ENCODE measurements at regions of chr3 and their contacts with region 1.

Region 1: DNA sequence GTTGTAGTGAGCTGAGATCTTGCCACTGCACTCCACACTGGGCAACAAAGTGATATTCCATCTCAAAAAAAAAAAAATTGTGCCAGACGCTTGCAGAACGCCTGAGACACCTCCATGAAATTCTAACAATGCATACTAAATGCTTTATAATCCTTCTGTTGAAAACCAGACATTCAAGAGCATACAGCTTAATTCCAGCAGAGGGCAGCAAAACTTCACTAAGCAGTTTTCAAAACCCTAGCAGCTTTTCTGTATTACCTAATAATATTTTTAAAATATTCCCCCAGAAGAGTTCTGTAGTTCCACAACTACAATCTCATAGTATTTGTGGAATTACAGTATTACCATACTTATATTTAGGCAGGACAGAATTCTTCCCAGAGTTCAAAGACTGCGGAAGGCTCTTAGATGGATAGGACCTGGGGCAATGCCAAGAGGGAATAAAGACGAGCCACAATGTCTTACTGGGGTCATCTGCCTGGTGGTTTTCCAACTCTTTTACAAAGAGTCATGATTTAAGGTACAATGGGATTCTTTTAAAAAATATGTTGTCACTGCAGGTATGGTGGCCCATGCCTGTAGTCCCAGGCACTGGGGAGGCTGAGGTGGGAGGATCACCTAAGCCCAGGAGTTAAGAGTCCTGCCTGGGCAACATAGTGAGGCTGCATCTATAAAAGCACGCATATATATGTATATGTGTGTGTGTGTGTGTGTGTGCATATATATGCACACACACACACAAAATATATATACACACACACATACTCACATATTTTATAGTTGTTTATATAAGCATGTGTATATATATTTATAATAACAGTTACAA is 19.6 kb upstream of the TASOR start:
- DNase-seq: peak in 1 of 2 donors; percentile 68
- H3K4me3 ChIP-seq: no peak overlapping the region
- H3K27ac ChIP-seq: peak overlapping the region in 1 of 2 donors; percentile 2
- H3K4me1 ChIP-seq: no peaks in the 10 kb centered on the region
- H3K27me3 ChIP-seq: no peaks in the 10 kb centered on the region
- CTCF ChIP-seq: peak; percentile 86 to 96 (median 89)
- POLR2A ChIP-seq: no peak

Region 2: GRCh38 chr3:56494686-56495322 is 207.9 kb before region 1 on chr3:
- intact Hi-C with region 1: no loop called
- DNase-seq: peak; percentile 55 to 63
- H3K4me3 ChIP-seq: no peak overlapping the region
- H3K27ac ChIP-seq: no peak overlapping the region
- H3K4me1 ChIP-seq: no peaks in the 10 kb centered on the region
- H3K27me3 ChIP-seq: no peaks in the 10 kb centered on the region
- CTCF ChIP-seq: peak; percentile 73 to 83 (median 76)
- POLR2A ChIP-seq: no peak

Region 3: GRCh38 chr3:56988458-56989168 is 285.9 kb after region 1 on chr3:
- intact Hi-C with region 1: loop called (anchors 5 kb)
- DNase-seq: peak; percentile 82 to 91
- H3K4me3 ChIP-seq: no peak overlapping the region
- H3K27ac ChIP-seq: peak overlapping the region; percentile 43 to 78
- H3K4me1 ChIP-seq: peaks cover 0 to 4% of the 10 kb centered on the region in 2 donors
- H3K27me3 ChIP-seq: no peaks in the 10 kb centered on the region
- CTCF ChIP-seq: peak; percentile 77 to 96 (median 88)
- POLR2A ChIP-seq: no peak

Measured in uterus (tissue), 4 donors.